ENCODE measurements at regions of chr5 and their contacts with region 1.

Region 1: DNA sequence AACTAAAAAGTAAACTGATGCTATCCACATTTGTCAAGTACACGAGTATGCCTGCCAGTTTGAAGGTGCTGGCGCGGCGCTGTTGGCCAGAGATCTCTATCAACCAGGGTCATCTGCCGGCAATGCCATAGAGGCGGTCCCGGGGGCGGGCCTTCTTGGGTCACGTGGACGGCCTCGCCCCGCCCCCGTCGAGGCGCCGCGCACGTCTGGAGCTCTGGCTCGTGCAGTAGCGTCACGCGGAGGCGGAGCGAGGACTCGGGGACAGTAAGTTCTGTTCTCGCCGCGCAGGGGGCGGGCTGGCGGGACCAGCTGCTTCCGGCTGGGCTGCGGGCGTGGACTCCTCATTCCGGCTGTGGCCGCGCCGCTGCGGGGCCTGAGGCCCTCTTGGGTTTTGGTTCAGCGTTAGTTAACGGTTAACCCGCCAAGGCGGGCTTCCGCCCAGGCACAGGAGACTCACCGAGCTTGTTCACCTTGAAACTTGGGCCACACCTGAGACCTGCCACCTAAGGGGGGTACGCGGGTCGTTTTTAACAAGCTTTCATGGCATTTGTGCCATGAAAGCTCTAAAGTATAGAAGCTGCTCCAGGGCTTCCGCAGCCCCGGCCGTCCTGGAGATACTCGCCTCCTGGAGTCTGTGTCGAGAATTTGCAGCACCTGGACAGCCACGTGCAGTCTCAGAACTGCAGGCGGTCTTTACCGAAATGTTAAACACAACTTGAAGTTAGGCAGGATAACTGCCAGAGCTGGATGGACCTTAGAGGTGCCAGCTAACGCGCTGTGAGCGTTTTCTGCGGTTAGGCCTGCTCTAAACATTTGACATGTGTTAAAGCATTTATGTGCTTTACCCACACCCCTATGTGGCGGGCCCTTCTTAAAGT is at the start of gene RFESD:
- DNase-seq: peak; percentile 96
- H3K4me3 Mint-ChIP-seq: peak within 1 kb of the TSS; percentile 82
- H3K27ac Mint-ChIP-seq: peak within 1 kb of the TSS; percentile 83
- H3K4me1 Mint-ChIP-seq: peaks cover 34% of the 10 kb centered on the region
- H3K27me3 Mint-ChIP-seq: no peaks in the 10 kb centered on the region
- total RNA-seq, gene RFESD: 9.1 to 9.7 TPM

Region 2: DNA sequence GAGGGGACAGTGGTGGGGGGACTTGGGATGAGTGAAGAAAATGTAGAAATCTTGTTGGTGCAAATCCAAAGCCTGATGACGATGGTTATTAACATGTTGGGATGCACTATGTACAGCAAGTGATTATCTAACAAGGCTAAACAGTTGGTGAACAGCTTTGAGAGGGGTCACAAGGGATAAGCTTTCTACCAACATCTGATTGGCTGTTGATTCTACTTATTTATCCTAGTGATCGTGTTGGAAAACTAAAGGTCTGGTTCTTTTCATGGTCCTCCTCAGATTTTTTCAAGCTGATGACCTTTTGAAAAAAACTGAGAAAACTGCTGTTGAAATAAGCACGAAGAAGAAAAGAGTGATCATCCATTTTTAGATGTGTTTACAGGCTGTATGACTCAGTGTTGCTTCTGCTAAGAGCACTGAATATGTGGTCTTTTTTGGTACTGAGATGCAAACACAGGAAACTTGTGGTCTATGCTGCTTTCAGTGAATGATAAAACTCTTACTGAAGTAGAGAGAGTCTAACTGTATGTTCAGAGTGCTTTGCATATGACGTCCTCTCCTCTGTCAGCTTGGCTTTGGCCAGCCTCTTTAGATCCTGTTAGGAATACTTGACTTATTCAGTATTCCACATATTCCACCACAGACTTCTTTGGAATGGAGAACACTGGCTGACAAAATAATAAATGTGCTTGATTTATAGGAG is 853.5 kb before region 1 on chr5:
- CTCF ChIA-PET with region 1: no interaction called
- intact Hi-C with region 1: no loop called
- DNase-seq: peak; percentile 46
- H3K4me3 Mint-ChIP-seq: peak overlapping the region; percentile 24
- H3K27ac Mint-ChIP-seq: peak overlapping the region; percentile 88
- H3K4me1 Mint-ChIP-seq: peaks cover 32% of the 10 kb centered on the region
- H3K27me3 Mint-ChIP-seq: no peaks in the 10 kb centered on the region

Region 3: GRCh38 chr5:95554647-95555548 is 91.9 kb before region 1 on chr5 and contains the starts of genes ARSK and SKIC3:
- CTCF ChIA-PET with region 1: no interaction called
- intact Hi-C with region 1: loop called (anchors 1 kb)
- DNase-seq: peak; percentile 92
- H3K4me3 Mint-ChIP-seq: peak within 1 kb of the TSS; percentile 87
- H3K27ac Mint-ChIP-seq: peak within 1 kb of the TSS; percentile 93
- H3K4me1 Mint-ChIP-seq: peaks cover 45% of the 10 kb centered on the region
- H3K27me3 Mint-ChIP-seq: no peaks in the 10 kb centered on the region
- total RNA-seq, gene ARSK: 4.5 to 5.1 TPM
- total RNA-seq, gene SKIC3: 67.4 to 69.5 TPM

Region 4: GRCh38 chr5:95712347-95712958 is 65.7 kb after region 1 on chr5:
- CTCF ChIA-PET with region 1: no interaction called
- intact Hi-C with region 1: loop called (anchors 1 kb)
- DNase-seq: peak; percentile 78
- H3K4me3 Mint-ChIP-seq: no peak overlapping the region
- H3K27ac Mint-ChIP-seq: no peak overlapping the region
- H3K4me1 Mint-ChIP-seq: peaks cover 30% of the 10 kb centered on the region
- H3K27me3 Mint-ChIP-seq: peaks cover 6% of the 10 kb centered on the region

Region 5: DNA sequence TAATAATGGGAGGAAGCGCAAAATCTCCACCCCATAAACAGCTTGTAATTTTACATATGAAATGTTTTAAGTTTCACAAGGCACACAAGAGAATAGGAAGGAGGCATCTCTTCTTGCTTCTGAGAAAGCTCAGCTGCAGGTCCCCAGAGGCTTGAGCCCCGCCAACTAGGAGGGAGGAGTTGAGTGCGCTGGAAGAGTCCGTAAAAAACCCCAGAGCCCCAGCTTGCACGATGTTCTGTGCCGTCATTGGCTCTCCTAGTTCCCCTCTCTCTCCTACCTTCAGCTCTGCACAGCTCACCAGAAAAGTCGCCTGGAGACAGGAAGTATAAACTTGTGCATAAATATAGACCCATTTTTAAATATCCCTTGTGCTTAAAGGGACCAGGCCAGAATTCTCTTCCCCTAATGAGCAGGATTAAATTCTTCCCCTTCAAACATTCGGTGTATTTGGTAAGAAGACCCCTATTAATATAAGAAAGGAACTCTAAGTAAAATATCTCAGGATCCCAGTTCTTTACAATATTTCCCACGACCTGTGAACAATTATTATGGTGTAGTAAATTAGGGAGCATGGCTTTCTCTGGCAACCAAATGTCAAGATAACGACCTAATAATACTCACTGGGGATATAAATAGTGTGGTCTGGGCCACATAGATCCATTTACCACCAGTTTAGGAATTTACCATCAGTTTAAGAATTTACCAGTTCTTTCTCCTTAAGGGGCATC is 162.1 kb after region 1 on chr5:
- CTCF ChIA-PET with region 1: no interaction called
- intact Hi-C with region 1: loop called (anchors 1 kb)
- DNase-seq: peak; percentile 92
- H3K4me3 Mint-ChIP-seq: peak overlapping the region; percentile 57
- H3K27ac Mint-ChIP-seq: peak overlapping the region; percentile 81
- H3K4me1 Mint-ChIP-seq: peaks cover 55% of the 10 kb centered on the region
- H3K27me3 Mint-ChIP-seq: no peaks in the 10 kb centered on the region

Region 6: GRCh38 chr5:95870105-95870672 is 223.4 kb after region 1 on chr5:
- CTCF ChIA-PET with region 1: no interaction called
- intact Hi-C with region 1: loop called (anchors 1 kb)
- DNase-seq: peak; percentile 65
- H3K4me3 Mint-ChIP-seq: peak overlapping the region; percentile 68
- H3K27ac Mint-ChIP-seq: peak overlapping the region; percentile 99
- H3K4me1 Mint-ChIP-seq: peaks cover 59% of the 10 kb centered on the region
- H3K27me3 Mint-ChIP-seq: no peaks in the 10 kb centered on the region

Region 7: GRCh38 chr5:96536991-96537785 is 890.4 kb after region 1 on chr5:
- CTCF ChIA-PET with region 1: interaction called, 3 read pairs
- intact Hi-C with region 1: loop called (anchors 2 kb)
- DNase-seq: no peak
- H3K4me3 Mint-ChIP-seq: no peak overlapping the region
- H3K27ac Mint-ChIP-seq: peak overlapping the region; percentile 83
- H3K4me1 Mint-ChIP-seq: peaks cover 32% of the 10 kb centered on the region
- H3K27me3 Mint-ChIP-seq: no peaks in the 10 kb centered on the region

Region 8: DNA sequence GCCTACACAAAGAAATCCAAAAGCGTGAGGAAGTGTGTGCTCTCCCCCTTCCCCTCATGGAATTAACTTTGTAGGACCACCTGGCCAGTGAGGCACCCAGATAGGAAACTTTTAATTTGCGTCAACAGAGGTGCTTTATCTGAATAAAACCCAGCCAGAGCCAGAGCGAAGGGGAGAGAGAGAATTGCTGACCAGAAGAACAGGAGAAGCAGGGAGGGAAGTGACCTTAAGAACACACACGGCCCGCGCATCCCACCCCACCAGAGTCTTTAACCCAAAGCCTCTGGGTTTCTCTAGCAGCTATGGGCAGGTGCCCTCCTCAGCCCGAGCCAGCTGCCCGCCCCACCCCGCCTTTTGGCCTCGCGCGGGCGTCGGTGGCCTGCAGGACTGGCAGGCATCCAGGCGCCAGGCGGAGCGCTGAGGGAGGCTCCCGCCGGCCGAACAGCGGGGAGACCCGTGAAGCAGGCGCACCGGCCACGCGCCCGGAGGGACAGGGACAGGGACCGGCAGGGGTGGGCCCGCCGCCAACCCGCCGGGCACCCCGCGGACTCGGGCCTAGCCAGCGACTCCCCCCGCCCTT is 1160.4 kb after region 1 on chr5:
- CTCF ChIA-PET with region 1: no interaction called
- intact Hi-C with region 1: loop called (anchors 10 kb)
- DNase-seq: peak; percentile 48
- H3K4me3 Mint-ChIP-seq: peak overlapping the region; percentile 86
- H3K27ac Mint-ChIP-seq: peak overlapping the region; percentile 97
- H3K4me1 Mint-ChIP-seq: peaks cover 80% of the 10 kb centered on the region
- H3K27me3 Mint-ChIP-seq: no peaks in the 10 kb centered on the region

Measured in activated naive CD4-positive, alpha-beta T cell treated with anti-CD3 and anti-CD28 coated beads for 36 hours (primary cell).